HepG2 (cell line): ENCODE measurements at regions of chr2 and their contacts with region 1.

Region 1: DNA sequence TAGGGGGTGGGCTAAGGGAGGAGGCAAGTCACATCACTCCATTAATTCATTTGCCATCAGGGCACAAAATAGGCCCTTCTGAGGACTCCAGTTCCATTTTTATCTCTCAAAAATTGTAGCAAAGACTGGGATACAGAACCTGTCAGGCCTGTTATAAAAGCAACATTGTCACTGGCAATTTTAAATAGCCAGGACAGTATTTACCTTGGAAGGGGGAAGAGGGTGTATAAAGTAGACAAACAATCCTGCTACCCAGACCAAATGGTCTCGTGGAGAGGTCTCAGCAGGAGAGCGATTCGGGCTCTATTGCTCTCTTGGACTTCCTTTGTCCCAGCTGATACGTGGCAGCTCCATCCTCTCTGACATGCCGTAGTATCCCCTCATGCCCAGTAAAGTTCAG is 740.3 kb upstream of the HS6ST1 start:
- DNase-seq: no peak
- ATAC-seq: no peak
- H3K4me3 ChIP-seq: no peak overlapping the region
- H3K27ac ChIP-seq: no peak overlapping the region
- H3K4me1 ChIP-seq: no peaks in the 10 kb centered on the region
- H3K27me3 ChIP-seq: peaks cover 0 to 8% of the 10 kb centered on the region in 2 experiments; a peak in 2 of 5 replicates
- CTCF ChIP-seq: no peak
- EP300 ChIP-seq: no peak
- POLR2A ChIP-seq: no peak
- RAD21 ChIP-seq: no peak

Region 2: GRCh38 chr2:128997166-128997866 is 61.7 kb before region 1 on chr2:
- CTCF ChIA-PET with region 1: no interaction called
- POLR2A ChIA-PET with region 1: no interaction called
- in situ Hi-C with region 1: no loop called
- intact Hi-C with region 1: no loop called
- DNase-seq: no peak
- ATAC-seq: no peak
- H3K4me3 ChIP-seq: no peak overlapping the region
- H3K27ac ChIP-seq: no peak overlapping the region
- H3K4me1 ChIP-seq: no peaks in the 10 kb centered on the region
- H3K27me3 ChIP-seq: peaks cover 0 to 4% of the 10 kb centered on the region in 2 experiments; a peak in 2 of 5 replicates
- CTCF ChIP-seq: no peak
- EP300 ChIP-seq: no peak
- POLR2A ChIP-seq: no peak
- RAD21 ChIP-seq: no peak

Region 3: GRCh38 chr2:129069875-129070594 is 11.1 kb after region 1 on chr2:
- CTCF ChIA-PET with region 1: no interaction called
- POLR2A ChIA-PET with region 1: no interaction called
- in situ Hi-C with region 1: no loop called
- intact Hi-C with region 1: loop called (anchors 1 kb)
- DNase-seq: peak; percentile 8
- ATAC-seq: peak; percentile 83
- H3K4me3 ChIP-seq: no peak overlapping the region
- H3K27ac ChIP-seq: no peak overlapping the region
- H3K4me1 ChIP-seq: 0 out of 2 replicates have a peak, but pooled peaks cover 8% of the 10 kb centered on the region
- H3K27me3 ChIP-seq: peaks cover 0 to 10% of the 10 kb centered on the region in 2 experiments; a peak in 2 of 5 replicates
- CTCF ChIP-seq: no peak
- EP300 ChIP-seq: no peak
- POLR2A ChIP-seq: no peak
- RAD21 ChIP-seq: no peak

Region 4: GRCh38 chr2:129144082-129144791 is 85.3 kb after region 1 on chr2:
- CTCF ChIA-PET with region 1: no interaction called
- POLR2A ChIA-PET with region 1: no interaction called
- in situ Hi-C with region 1: no loop called
- intact Hi-C with region 1: no loop called
- DNase-seq: no peak
- ATAC-seq: no peak
- H3K4me3 ChIP-seq: no peak overlapping the region
- H3K27ac ChIP-seq: no peak overlapping the region
- H3K4me1 ChIP-seq: no peaks in the 10 kb centered on the region
- H3K27me3 ChIP-seq: peaks cover 0 to 17% of the 10 kb centered on the region in 2 experiments; a peak in 2 of 5 replicates
- CTCF ChIP-seq: no peak
- EP300 ChIP-seq: no peak
- POLR2A ChIP-seq: no peak
- RAD21 ChIP-seq: no peak

Region 5: DNA sequence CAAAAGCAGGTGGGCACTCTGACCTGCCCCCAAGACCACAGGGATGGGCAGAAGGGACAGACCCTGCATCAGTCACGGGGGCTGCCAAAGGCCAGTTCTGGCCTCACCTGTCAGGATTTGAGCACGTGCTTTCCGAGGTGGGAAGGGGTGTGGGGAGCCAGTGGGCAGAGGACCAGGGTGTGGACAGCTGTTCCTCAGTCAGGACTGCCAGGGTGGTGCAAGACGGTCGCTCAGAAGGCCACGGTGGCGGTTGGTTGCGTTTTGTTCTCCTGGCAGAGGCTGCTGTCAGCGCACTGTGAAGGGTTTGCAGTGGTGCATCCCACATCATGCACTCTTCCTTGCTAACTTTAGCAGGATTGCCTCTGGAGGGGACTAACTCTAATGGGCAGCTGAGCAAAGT is 255.2 kb after region 1 on chr2:
- CTCF ChIA-PET with region 1: no interaction called
- POLR2A ChIA-PET with region 1: no interaction called
- in situ Hi-C with region 1: no loop called
- intact Hi-C with region 1: no loop called
- DNase-seq: no peak
- ATAC-seq: no peak
- H3K4me3 ChIP-seq: no peak overlapping the region
- H3K27ac ChIP-seq: no peak overlapping the region
- H3K4me1 ChIP-seq: no peaks in the 10 kb centered on the region
- H3K27me3 ChIP-seq: no peaks in the 10 kb centered on the region; a peak in 1 of 5 replicates
- CTCF ChIP-seq: no peak
- EP300 ChIP-seq: no peak
- POLR2A ChIP-seq: no peak
- RAD21 ChIP-seq: no peak

Region 6: DNA sequence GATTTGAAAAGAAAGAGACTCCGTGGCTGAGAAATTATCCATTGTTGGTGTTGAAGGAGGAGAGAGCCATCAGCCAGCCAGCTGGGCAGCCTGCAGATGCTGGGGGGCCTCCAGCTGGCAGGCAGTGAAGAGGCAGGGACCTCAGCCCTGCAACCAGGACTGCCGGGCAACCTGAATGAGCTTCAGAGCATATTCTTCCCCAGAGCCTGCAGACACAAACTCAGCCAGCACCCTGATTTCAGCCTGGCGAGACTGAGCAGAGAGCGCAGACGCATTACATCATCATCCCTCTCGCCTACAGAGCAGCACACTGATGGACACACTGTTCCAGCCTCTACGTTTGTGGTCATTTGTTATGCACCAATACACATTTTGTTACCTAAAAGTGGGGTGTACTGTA is 769.8 kb after region 1 on chr2:
- CTCF ChIA-PET with region 1: no interaction called
- POLR2A ChIA-PET with region 1: no interaction called
- in situ Hi-C with region 1: no loop called
- intact Hi-C with region 1: no loop called
- DNase-seq: no peak
- ATAC-seq: no peak
- H3K4me3 ChIP-seq: no peak overlapping the region
- H3K27ac ChIP-seq: no peak overlapping the region
- H3K4me1 ChIP-seq: no peaks in the 10 kb centered on the region
- H3K27me3 ChIP-seq: peaks cover 0 to 18% of the 10 kb centered on the region in 2 experiments; a peak in 4 of 5 replicates
- CTCF ChIP-seq: no peak
- EP300 ChIP-seq: no peak
- POLR2A ChIP-seq: no peak
- RAD21 ChIP-seq: no peak